Dorsolateral prefrontal cortex (tissue), 120 donors: ENCODE measurements at regions of chr4 and their contacts with region 1.

Region 1: GRCh38 chr4:84966383-84967242 is at the start of gene WDFY3:
- DNase-seq: peak; percentile 56 to 89 (median 85)
- H3K4me3 ChIP-seq: peak within 1 kb of the TSS; percentile 66 to 96 (median 86)
- H3K27ac ChIP-seq: peak within 1 kb of the TSS; percentile 70 to 99 (median 97)
- H3K27me3 ChIP-seq: no peaks in the 10 kb centered on the region
- CTCF ChIP-seq: peak in 32 of 56 donors; percentile 7 to 45 (median 30)
- total RNA-seq, gene WDFY3: 146 to 279 (median 196) TPM

Region 2: DNA sequence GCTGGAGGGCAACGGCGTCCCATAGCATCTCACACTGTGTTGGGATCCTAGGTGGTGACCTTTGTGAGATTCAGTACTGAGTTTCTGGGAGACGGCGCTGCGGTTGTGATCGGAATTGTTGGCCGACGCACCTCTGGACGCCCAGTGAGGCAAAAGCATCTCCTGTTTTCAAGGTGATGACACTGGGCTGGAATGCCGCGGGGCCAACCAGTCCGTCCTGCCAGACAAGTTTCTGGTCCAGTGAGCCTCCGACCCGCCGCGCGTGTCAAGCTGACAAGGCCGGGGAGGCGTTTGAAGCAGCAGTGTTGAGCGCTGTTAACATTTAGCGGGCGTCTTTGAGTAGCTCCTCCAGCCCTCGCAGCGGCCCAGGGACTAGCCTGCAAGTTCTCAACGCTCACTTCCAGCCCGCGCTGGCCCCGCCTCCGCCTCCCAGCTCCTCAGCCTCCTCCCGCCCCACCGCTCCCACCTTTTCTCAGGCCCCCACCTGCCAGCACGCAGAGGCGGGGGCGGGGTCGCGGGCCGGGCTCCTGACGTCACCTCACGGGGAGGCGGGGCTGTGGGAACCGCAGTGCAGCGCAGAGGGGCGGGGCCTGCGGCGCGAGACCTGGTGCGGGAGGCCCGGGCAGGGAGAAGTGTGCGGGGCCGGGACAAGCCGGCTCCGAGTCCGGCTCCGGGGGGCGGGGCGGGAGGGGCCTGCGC is 384.2 kb before region 1 on chr4:
- intact Hi-C with region 1: loop called (anchors 5 kb)
- DNase-seq: peak; percentile 73 to 98 (median 88)
- H3K4me3 ChIP-seq: peak overlapping the region; percentile 63 to 99 (median 85)
- H3K27ac ChIP-seq: peak overlapping the region in 56 of 59 donors; percentile 11 to 95 (median 74)
- H3K27me3 ChIP-seq: no peaks in the 10 kb centered on the region
- CTCF ChIP-seq: peak in 2 of 56 donors; percentile 4 to 12

Region 3: GRCh38 chr4:84750253-84750959 is 216.2 kb before region 1 on chr4:
- intact Hi-C with region 1: loop called in 1 of 2 experiments (anchors 2 kb)
- DNase-seq: no peak
- H3K4me3 ChIP-seq: peak overlapping the region in 1 of 59 donors; percentile 2
- H3K27ac ChIP-seq: peak overlapping the region in 22 of 59 donors; percentile 0 to 57 (median 16)
- H3K27me3 ChIP-seq: no peaks in the 10 kb centered on the region
- CTCF ChIP-seq: peak; percentile 69 to 95 (median 83)

Region 4: GRCh38 chr4:84809946-84810345 is 156.7 kb before region 1 on chr4:
- intact Hi-C with region 1: loop called in 1 of 2 experiments (anchors 5 kb)
- DNase-seq: peak in 1 of 10 donors; percentile 37
- H3K4me3 ChIP-seq: no peak overlapping the region
- H3K27ac ChIP-seq: peak overlapping the region in 41 of 59 donors; percentile 0 to 80 (median 47)
- H3K27me3 ChIP-seq: no peaks in the 10 kb centered on the region
- CTCF ChIP-seq: no peak

Region 5: DNA sequence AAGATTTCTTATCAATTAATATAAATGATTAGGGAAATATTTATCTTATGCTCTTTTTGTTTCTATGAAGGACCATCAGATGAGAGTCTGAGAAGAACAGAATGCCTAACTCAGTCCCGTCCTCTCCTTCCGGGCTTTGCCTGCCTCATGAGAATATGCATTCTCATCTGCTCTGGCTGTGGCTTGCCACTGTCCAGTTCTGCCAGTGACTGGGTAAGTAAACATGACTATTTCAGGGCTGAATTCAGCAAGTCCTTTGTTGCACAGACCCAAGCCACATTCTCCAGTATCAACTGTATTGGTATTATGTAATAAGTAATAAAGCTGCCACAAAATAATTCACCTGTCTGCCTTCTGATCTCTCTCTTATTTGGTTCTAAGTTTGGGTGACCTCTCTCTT is 110.8 kb before region 1 on chr4:
- intact Hi-C with region 1: loop called in 1 of 2 experiments (anchors 5 kb)
- DNase-seq: peak in 9 of 10 donors; percentile 38 to 68 (median 59)
- H3K4me3 ChIP-seq: peak overlapping the region in 6 of 59 donors; percentile 1 to 25 (median 5)
- H3K27ac ChIP-seq: peak overlapping the region in 58 of 59 donors; percentile 9 to 92 (median 76)
- H3K27me3 ChIP-seq: no peaks in the 10 kb centered on the region
- CTCF ChIP-seq: peak in 3 of 56 donors; percentile 13 to 27 (median 14)

Region 6: DNA sequence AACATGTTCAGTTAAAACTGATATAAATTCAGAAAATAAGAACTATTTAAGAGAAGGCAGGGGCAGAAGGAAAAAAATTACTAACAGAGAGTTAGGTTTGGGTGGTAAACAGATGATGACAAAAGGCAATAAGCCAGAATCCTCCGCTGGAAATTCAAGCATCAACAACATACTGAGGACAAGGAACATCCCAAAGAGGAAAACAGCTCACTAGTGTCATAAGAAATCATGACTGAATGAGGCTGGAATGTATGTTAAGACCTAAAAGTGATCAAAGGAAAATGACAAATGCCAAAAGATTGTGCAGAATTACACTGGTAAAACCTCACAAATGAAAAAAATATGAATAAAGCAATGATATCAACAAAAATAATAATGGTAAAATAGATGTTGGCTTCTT is 88.5 kb before region 1 on chr4:
- intact Hi-C with region 1: no loop called
- DNase-seq: no peak
- H3K4me3 ChIP-seq: no peak overlapping the region
- H3K27ac ChIP-seq: no peak overlapping the region
- H3K27me3 ChIP-seq: no peaks in the 10 kb centered on the region
- CTCF ChIP-seq: no peak

Region 7: GRCh38 chr4:84915396-84915780 is 51.2 kb before region 1 on chr4:
- intact Hi-C with region 1: loop called in 1 of 2 experiments (anchors 5 kb)
- DNase-seq: no peak
- H3K4me3 ChIP-seq: peak overlapping the region in 2 of 59 donors; percentile 1 to 21
- H3K27ac ChIP-seq: peak overlapping the region in 48 of 59 donors; percentile 3 to 82 (median 46)
- H3K27me3 ChIP-seq: no peaks in the 10 kb centered on the region
- CTCF ChIP-seq: no peak

Region 8: GRCh38 chr4:84977396-84977795 is 10.8 kb after region 1 on chr4:
- intact Hi-C with region 1: no loop called
- DNase-seq: no peak
- H3K4me3 ChIP-seq: no peak overlapping the region
- H3K27ac ChIP-seq: no peak overlapping the region
- H3K27me3 ChIP-seq: no peaks in the 10 kb centered on the region
- CTCF ChIP-seq: no peak